BJ (cell line): ENCODE measurements at regions of chr2 and their contacts with region 1.

Region 1: GRCh38 chr2:222298311-222299150 is at the start of gene PAX3:
- DNase-seq: no peak
- H3K4me3 ChIP-seq: peak within 1 kb of the TSS; percentile 72
- H3K27me3 ChIP-seq: peaks cover 7% of the 10 kb centered on the region; the same call in 1 of the 2 replicates
- CTCF ChIP-seq: no peak
- polyA plus RNA-seq, gene PAX3: 7.4 and 11.1 TPM in 2 replicates

Region 2: GRCh38 chr2:222283634-222284033 is 14.9 kb before region 1 on chr2:
- CTCF ChIA-PET with region 1: no interaction called
- POLR2A ChIA-PET with region 1: no interaction called
- DNase-seq: no peak
- H3K4me3 ChIP-seq: no peak overlapping the region
- H3K27me3 ChIP-seq: no peaks in the 10 kb centered on the region
- CTCF ChIP-seq: no peak

Region 3: GRCh38 chr2:222311978-222312738 is 13.6 kb after region 1 on chr2:
- CTCF ChIA-PET with region 1: interaction called, 3 read pairs
- POLR2A ChIA-PET with region 1: interaction called, 18 read pairs
- DNase-seq: no peak
- H3K4me3 ChIP-seq: no peak overlapping the region
- H3K27me3 ChIP-seq: peaks cover 46% of the 10 kb centered on the region
- CTCF ChIP-seq: no peak